ENCODE measurements at regions of chr7 and their contacts with region 1.

Region 1: GRCh38 chr7:35975851-35976454 is 175.1 kb downstream of the SEPTIN7 start:
- DNase-seq: peak; percentile 84
- ATAC-seq: peak; percentile 98
- H3K4me3 ChIP-seq: no peak overlapping the region
- H3K27ac ChIP-seq: no peak overlapping the region
- H3K4me1 ChIP-seq: no peaks in the 10 kb centered on the region
- H3K27me3 ChIP-seq: no peaks in the 10 kb centered on the region
- CTCF ChIP-seq: peak; percentile 80

Region 2: DNA sequence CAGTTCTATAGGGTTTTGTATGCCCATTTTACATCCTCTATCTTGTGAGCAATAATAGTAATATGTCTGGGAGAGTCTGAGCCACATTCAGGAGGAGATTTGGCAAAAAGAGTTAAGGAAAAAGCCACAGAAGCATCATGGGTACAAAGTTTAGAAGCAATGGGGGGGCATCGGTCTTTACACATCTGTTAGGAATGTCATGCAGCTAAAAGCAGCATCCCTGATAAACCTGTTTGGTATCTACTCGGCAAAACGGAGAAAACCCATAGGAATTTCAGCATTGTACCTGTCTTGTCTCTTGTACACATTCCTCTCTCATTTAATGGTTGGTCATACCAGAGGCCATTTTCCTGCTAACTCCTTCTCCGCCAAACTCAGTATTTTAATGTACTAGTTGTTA is 268.5 kb before region 1 on chr7:
- CTCF ChIA-PET with region 1: interaction called, 3 read pairs
- POLR2A ChIA-PET with region 1: no interaction called
- intact Hi-C with region 1: loop called (anchors 5 kb)
- DNase-seq: peak; percentile 69
- ATAC-seq: peak; percentile 28
- H3K4me3 ChIP-seq: no peak overlapping the region
- H3K27ac ChIP-seq: no peak overlapping the region
- H3K4me1 ChIP-seq: peaks cover 9% of the 10 kb centered on the region
- H3K27me3 ChIP-seq: no peaks in the 10 kb centered on the region
- CTCF ChIP-seq: no peak

Region 3: DNA sequence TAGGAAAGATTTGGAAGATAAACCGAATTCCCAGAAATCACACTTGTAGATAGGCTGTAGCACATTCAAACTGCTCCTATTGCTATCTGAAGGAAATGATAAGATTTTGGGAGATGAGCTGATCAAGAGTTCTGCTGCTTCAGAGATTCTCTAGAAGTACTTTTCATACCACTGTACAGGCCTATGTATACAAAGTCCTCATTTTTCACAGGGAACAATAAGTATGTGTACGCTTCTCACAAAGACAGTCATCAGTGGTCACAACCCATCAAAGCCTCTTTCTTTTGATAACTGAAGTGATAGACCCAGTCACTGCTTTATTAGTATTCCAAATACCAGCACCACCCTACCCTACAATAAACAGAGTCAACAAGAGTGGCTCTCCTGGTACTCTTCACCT is 190.7 kb before region 1 on chr7:
- CTCF ChIA-PET with region 1: no interaction called
- POLR2A ChIA-PET with region 1: interaction called, 12 read pairs
- intact Hi-C with region 1: no loop called
- DNase-seq: no peak
- ATAC-seq: no peak
- H3K4me3 ChIP-seq: no peak overlapping the region
- H3K27ac ChIP-seq: no peak overlapping the region
- H3K4me1 ChIP-seq: no peaks in the 10 kb centered on the region
- H3K27me3 ChIP-seq: no peaks in the 10 kb centered on the region
- CTCF ChIP-seq: no peak